Activated CD4-positive, alpha-beta memory T cell treated with anti-CD3 and anti-CD28 coated beads, Interleukin-2, amount 10 ng/mL, durations not matched to agents 7 days and 5 days (primary cell): ENCODE measurements at regions of chr2 and their contacts with region 1.

Region 1: GRCh38 chr2:177164584-177165052 is 48.0 kb upstream of the HNRNPA3 start:
- DNase-seq: peak; percentile 83
- H3K4me3 Mint-ChIP-seq: no peak overlapping the region
- H3K27ac Mint-ChIP-seq: no peak overlapping the region
- H3K4me1 Mint-ChIP-seq: peaks cover 36% of the 10 kb centered on the region
- H3K27me3 Mint-ChIP-seq: peaks cover 9% of the 10 kb centered on the region

Region 2: GRCh38 chr2:176613323-176613987 is 551.2 kb before region 1 on chr2:
- CTCF ChIA-PET with region 1: no interaction called
- POLR2A ChIA-PET with region 1: no interaction called
- DNase-seq: no peak
- H3K4me3 Mint-ChIP-seq: no peak overlapping the region
- H3K27ac Mint-ChIP-seq: no peak overlapping the region
- H3K4me1 Mint-ChIP-seq: no peaks in the 10 kb centered on the region
- H3K27me3 Mint-ChIP-seq: peaks cover 21% of the 10 kb centered on the region

Region 3: DNA sequence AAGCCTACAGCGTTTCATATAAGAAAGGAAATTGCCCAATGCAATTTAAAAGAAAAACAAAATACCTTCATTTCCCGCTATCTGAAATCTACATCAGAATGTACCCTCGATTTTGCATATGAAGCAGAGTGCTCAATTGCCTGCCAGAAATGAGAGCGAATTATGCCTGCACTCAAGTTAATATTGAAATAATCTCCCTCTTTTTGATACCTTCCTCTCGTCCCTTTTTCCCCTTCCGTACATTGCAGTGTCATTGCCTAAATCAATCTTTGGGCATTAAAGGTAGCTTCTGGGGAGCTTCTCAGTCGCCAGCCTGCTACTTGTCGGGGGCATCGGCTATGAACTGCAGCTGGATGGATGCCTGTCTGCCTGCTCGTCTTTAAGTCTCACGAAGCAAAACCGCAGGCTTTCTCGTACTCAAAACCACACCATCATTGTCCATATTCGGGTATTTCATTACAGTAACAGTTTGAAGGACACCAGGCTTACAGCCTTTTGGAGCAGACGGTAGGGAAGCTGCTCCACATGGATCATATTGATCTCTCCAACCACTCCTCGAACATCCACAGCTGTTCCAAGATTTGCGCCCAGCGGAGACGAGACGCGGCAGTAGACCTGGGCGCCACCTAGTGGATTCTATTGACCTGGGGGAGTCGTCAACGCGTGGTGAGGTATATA is 16.0 kb before region 1 on chr2:
- CTCF ChIA-PET with region 1: interaction called, 47 read pairs
- POLR2A ChIA-PET with region 1: interaction called, 3 read pairs
- DNase-seq: peak; percentile 78
- H3K4me3 Mint-ChIP-seq: peak overlapping the region; percentile 80
- H3K27ac Mint-ChIP-seq: no peak overlapping the region
- H3K4me1 Mint-ChIP-seq: peaks cover 21% of the 10 kb centered on the region
- H3K27me3 Mint-ChIP-seq: peaks cover 58% of the 10 kb centered on the region

Region 4: GRCh38 chr2:177183860-177184259 is 19.2 kb after region 1 on chr2:
- CTCF ChIA-PET with region 1: interaction called, 24 read pairs
- POLR2A ChIA-PET with region 1: no interaction called
- DNase-seq: no peak
- H3K4me3 Mint-ChIP-seq: no peak overlapping the region
- H3K27ac Mint-ChIP-seq: no peak overlapping the region
- H3K4me1 Mint-ChIP-seq: no peaks in the 10 kb centered on the region
- H3K27me3 Mint-ChIP-seq: peaks cover 19% of the 10 kb centered on the region

Region 5: GRCh38 chr2:177212106-177212890 is 47.7 kb after region 1 on chr2 and contains the start of gene HNRNPA3:
- CTCF ChIA-PET with region 1: interaction called, 30 read pairs
- POLR2A ChIA-PET with region 1: interaction called, 39 read pairs
- DNase-seq: peak; percentile 100
- H3K4me3 Mint-ChIP-seq: peak within 1 kb of the TSS; percentile 94
- H3K27ac Mint-ChIP-seq: peak within 1 kb of the TSS; percentile 100
- H3K4me1 Mint-ChIP-seq: peaks cover 46% of the 10 kb centered on the region
- H3K27me3 Mint-ChIP-seq: no peaks in the 10 kb centered on the region
- total RNA-seq, gene HNRNPA3: 309 to 312 TPM

Region 6: GRCh38 chr2:177296040-177296439 is 131.4 kb after region 1 on chr2:
- CTCF ChIA-PET with region 1: interaction called, 56 read pairs
- POLR2A ChIA-PET with region 1: interaction called, 6 read pairs
- DNase-seq: no peak
- H3K4me3 Mint-ChIP-seq: no peak overlapping the region
- H3K27ac Mint-ChIP-seq: no peak overlapping the region
- H3K4me1 Mint-ChIP-seq: peaks cover 34% of the 10 kb centered on the region
- H3K27me3 Mint-ChIP-seq: no peaks in the 10 kb centered on the region

Region 7: GRCh38 chr2:177332041-177332991 is 167.7 kb after region 1 on chr2:
- CTCF ChIA-PET with region 1: interaction called, 168 read pairs
- POLR2A ChIA-PET with region 1: interaction called, 19 read pairs
- DNase-seq: peak; percentile 41
- H3K4me3 Mint-ChIP-seq: no peak overlapping the region
- H3K27ac Mint-ChIP-seq: no peak overlapping the region
- H3K4me1 Mint-ChIP-seq: peaks cover 12% of the 10 kb centered on the region
- H3K27me3 Mint-ChIP-seq: no peaks in the 10 kb centered on the region

Region 8: GRCh38 chr2:177413703-177414102 is 249.1 kb after region 1 on chr2:
- CTCF ChIA-PET with region 1: interaction called, 36 read pairs
- POLR2A ChIA-PET with region 1: no interaction called
- DNase-seq: no peak
- H3K4me3 Mint-ChIP-seq: no peak overlapping the region
- H3K27ac Mint-ChIP-seq: no peak overlapping the region
- H3K4me1 Mint-ChIP-seq: peaks cover 1% of the 10 kb centered on the region
- H3K27me3 Mint-ChIP-seq: no peaks in the 10 kb centered on the region